GM12878 (cell line): ENCODE measurements at regions of chr10 and their contacts with region 1.

Region 1: GRCh38 chr10:75899816-75900390 is 468.5 kb downstream of the LRMDA start:
- DNase-seq: no peak
- ATAC-seq: no peak
- H3K4me3 ChIP-seq: no peak overlapping the region
- H3K27ac ChIP-seq: no peak overlapping the region
- H3K4me1 ChIP-seq: no peaks in the 10 kb centered on the region
- H3K27me3 ChIP-seq: no peaks in the 10 kb centered on the region; a peak in 1 of 4 replicates
- CTCF ChIP-seq: no peak
- EP300 ChIP-seq: no peak
- POLR2A ChIP-seq: no peak
- RAD21 ChIP-seq: no peak

Region 2: GRCh38 chr10:75910032-75910431 is 10.1 kb after region 1 on chr10:
- CTCF ChIA-PET with region 1: interaction called, 3 read pairs
- POLR2A ChIA-PET with region 1: no interaction called
- RAD21 ChIA-PET with region 1: interaction called, 3 read pairs
- SMC1A ChIA-PET with region 1: interaction called, 10 read pairs
- in situ Hi-C with region 1: no loop called
- intact Hi-C with region 1: no loop called
- DNase-seq: no peak
- ATAC-seq: no peak
- H3K4me3 ChIP-seq: no peak overlapping the region
- H3K27ac ChIP-seq: no peak overlapping the region
- H3K4me1 ChIP-seq: no peaks in the 10 kb centered on the region
- H3K27me3 ChIP-seq: peaks cover 0 to 2% of the 10 kb centered on the region in 2 experiments; a peak in 1 of 4 replicates
- CTCF ChIP-seq: peak; percentile 16 to 29 (median 18); a peak in 3 of 6 replicates
- EP300 ChIP-seq: no peak
- POLR2A ChIP-seq: no peak
- RAD21 ChIP-seq: no peak